Posterior vena cava (tissue), 2 donors: ENCODE measurements at regions of chr4 and their contacts with region 1.

Region 1: DNA sequence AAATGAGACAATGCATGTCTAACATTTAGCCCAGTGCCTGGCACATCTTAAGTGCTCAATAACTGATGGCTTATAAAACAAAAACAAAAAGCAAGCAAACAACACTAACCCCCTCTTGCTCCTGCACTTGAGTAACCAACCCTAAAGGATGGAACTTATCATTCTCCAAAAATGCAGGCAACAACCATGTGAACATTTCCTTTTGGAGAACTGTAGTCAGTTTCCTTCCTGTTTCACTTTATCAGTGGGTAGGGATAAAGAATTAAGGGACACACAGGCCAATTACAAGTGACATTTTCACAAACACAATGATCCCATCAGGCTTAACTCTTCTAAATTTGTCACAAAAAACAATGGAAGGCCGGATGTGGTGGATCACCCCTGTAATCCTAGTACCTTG is 30.4 kb downstream of the RPS3A start:
- DNase-seq: no peak

Region 2: DNA sequence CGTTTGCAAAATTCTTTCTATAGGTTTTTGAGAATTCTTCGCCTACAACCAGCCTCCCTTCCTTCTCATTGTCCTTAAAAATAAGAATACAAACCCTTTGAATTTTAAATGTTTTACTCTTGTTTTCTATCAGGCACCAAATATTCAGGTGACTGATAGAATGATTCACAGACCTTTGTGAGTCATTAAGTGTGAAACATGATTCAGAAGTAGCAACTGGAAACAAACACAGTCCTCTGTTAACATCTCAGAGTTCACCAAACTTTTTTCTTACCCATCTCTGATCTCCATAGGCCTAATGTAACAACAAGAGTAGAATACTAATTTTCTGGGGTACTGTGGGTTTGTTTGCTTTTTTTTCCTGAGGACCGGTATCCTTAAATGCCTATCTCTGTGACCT is 611.2 kb before region 1 on chr4:
- intact Hi-C with region 1: no loop called
- DNase-seq: no peak

Region 3: DNA sequence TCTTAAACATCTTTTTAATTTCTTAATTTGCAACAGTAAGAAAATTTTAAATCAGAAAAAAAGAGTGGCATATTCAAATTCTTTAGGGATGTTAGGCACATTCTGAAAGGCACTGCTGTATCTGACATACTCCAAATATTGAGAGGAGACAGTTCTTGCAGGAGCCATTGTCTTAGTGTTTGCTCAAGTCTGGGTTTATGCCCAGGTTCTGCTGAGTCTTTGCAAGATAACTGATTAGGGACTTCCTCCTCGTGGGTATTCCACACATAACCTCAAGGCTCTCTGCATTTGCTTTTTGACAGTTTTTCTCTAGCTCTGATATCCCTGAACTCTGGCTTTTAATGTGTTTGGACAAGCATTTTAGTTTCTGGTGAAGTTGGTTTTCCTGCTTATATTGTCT is 22.2 kb after region 1 on chr4:
- intact Hi-C with region 1: no loop called
- DNase-seq: no peak

Region 4: DNA sequence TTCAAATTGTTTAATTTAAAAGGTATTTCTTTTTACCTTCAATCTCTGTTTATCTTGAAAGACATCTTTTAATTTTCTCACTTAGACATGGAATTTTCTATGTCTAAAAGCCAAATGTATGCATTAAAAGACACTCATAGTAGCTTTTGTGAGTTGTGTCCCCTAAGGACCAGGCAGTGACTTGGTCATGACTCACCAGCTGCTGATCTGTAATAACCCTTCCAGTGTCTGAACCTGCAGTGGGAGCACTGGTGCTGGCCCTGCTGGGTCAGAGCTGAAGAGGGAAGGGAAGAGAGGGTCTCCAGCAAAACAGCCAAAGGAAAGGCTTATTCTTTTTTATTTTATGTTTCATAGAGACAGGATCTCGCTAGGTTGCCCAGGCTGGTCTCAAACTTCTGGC is 226.7 kb after region 1 on chr4:
- intact Hi-C with region 1: loop called in 1 of 2 experiments (anchors 10 kb)
- DNase-seq: no peak